Activated CD4-positive, alpha-beta T cell treated with anti-CD3 and anti-CD28 coated beads for 36 hours (primary cell): ENCODE measurements at regions of chr3 and their contacts with region 1.

Region 1: GRCh38 chr3:39499651-39500240 is 32.3 kb downstream of the MOBP start:
- DNase-seq: no peak
- ATAC-seq: no peak
- H3K4me3 Mint-ChIP-seq: no peak overlapping the region
- H3K27ac Mint-ChIP-seq: no peak overlapping the region
- H3K4me1 Mint-ChIP-seq: peaks cover 2% of the 10 kb centered on the region
- H3K27me3 Mint-ChIP-seq: peaks cover 27% of the 10 kb centered on the region

Region 2: GRCh38 chr3:39414421-39414907 is 85.3 kb before region 1 on chr3:
- CTCF ChIA-PET with region 1: interaction called, 7 read pairs
- POLR2A ChIA-PET with region 1: no interaction called
- intact Hi-C with region 1: loop called (anchors 1 to 2 kb)
- DNase-seq: peak; percentile 18
- ATAC-seq: peak; percentile 24
- H3K4me3 Mint-ChIP-seq: no peak overlapping the region
- H3K27ac Mint-ChIP-seq: peak overlapping the region; percentile 58
- H3K4me1 Mint-ChIP-seq: peaks cover 25% of the 10 kb centered on the region
- H3K27me3 Mint-ChIP-seq: peaks cover 3% of the 10 kb centered on the region

Region 3: GRCh38 chr3:39485547-39485946 is 14.2 kb before region 1 on chr3:
- CTCF ChIA-PET with region 1: interaction called, 13 read pairs
- POLR2A ChIA-PET with region 1: no interaction called
- intact Hi-C with region 1: no loop called
- DNase-seq: no peak
- ATAC-seq: no peak
- H3K4me3 Mint-ChIP-seq: no peak overlapping the region
- H3K27ac Mint-ChIP-seq: no peak overlapping the region
- H3K4me1 Mint-ChIP-seq: no peaks in the 10 kb centered on the region
- H3K27me3 Mint-ChIP-seq: peaks cover 12% of the 10 kb centered on the region

Region 4: DNA sequence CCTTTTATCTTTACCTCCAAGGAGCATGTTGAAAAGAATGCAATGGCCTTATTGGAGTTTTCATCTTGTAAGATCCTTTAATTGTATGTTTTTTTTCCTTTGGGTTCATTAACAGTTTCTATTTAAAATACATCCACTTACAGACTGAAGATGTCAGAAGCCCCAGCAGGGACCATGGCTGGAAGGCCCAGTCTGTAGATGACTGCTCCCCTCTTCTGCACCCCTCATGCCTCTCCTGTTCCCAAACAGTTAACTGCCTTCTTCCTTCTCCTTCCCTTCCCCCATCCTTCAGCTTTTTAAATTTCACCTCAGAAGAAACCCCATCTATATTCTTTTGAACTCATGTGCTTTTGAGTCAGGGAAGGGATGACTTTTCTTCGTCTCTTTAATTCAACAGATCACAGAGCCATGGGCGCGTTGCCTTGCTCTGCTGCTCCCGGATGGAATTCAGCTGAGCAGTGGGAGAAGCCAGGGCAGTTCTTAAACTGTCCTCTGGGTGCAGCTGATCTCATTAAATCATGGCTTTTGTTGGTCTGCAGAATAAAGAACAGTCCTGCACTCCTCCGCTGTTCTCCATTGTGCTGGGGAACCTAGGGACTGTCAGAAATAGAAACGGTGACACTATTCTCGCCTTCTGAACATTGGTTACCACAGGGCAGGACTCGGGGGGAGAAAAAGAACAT is 738.3 kb after region 1 on chr3:
- CTCF ChIA-PET with region 1: no interaction called
- POLR2A ChIA-PET with region 1: no interaction called
- intact Hi-C with region 1: no loop called
- DNase-seq: no peak
- ATAC-seq: no peak
- H3K4me3 Mint-ChIP-seq: no peak overlapping the region
- H3K27ac Mint-ChIP-seq: no peak overlapping the region
- H3K4me1 Mint-ChIP-seq: no peaks in the 10 kb centered on the region
- H3K27me3 Mint-ChIP-seq: no peaks in the 10 kb centered on the region